Dendritic cell treated with granulocyte-macrophage colony-stimulating factor and Interleukin-4, amounts not matched to agents 40 ng/mL and 50 ng/mL, for 4 days (primary cell): ENCODE measurements at regions of chr14 and their contacts with region 1.

Region 1: DNA sequence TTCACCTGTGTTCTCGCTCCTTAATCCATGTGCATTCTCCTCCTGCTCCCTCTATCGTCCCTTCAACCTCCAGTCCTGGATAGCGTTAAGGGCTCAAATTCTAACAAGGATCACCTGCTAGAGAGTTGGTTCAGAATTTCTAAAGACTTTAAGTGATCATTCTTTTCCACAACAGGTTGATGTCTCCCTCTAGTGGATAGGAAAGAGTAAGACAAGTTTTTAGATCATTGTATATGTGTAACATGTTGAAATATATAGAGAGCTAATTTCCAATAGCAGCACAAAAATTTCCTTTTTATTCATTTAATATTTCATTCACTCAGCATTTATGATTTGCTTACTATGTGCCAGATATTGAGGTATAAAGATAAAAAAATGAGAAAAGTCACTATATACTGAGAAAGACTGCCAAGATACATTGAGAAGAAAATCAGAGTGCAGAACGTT is 9.3 kb upstream of the ESR2 start:
- H3K4me3 Mint-ChIP-seq: no peak overlapping the region
- H3K27ac Mint-ChIP-seq: no peak overlapping the region
- H3K4me1 Mint-ChIP-seq: no peaks in the 10 kb centered on the region
- H3K27me3 Mint-ChIP-seq: no peaks in the 10 kb centered on the region

Region 2: DNA sequence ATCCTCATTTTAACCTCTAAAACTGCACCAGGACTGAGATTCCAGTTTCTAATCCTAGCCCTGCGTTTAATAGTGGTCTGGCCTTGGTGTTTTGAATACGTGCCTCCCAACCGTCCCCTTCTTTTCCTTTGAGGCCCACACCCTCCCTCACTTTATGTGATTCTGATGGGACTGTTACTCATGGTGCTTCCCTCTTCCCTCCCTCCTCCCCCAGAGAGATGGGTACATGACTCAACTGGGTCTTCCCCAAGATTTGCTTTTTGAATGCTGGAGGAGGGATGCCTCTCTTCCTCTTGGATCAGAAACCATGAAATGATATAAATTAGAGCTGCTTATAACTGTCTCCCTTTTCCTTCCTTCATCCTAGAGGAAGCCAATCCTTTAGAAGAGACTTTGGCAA is 752.2 kb before region 1 on chr14:
- intact Hi-C with region 1: no loop called
- H3K4me3 Mint-ChIP-seq: no peak overlapping the region
- H3K27ac Mint-ChIP-seq: no peak overlapping the region
- H3K4me1 Mint-ChIP-seq: peaks cover 16% of the 10 kb centered on the region
- H3K27me3 Mint-ChIP-seq: peaks cover 3% of the 10 kb centered on the region

Region 3: GRCh38 chr14:63624203-63624602 is 679.3 kb before region 1 on chr14:
- intact Hi-C with region 1: loop called (anchors 5 kb)
- H3K4me3 Mint-ChIP-seq: no peak overlapping the region
- H3K27ac Mint-ChIP-seq: no peak overlapping the region
- H3K4me1 Mint-ChIP-seq: no peaks in the 10 kb centered on the region
- H3K27me3 Mint-ChIP-seq: no peaks in the 10 kb centered on the region

Region 4: GRCh38 chr14:63795532-63795931 is 508.0 kb before region 1 on chr14:
- intact Hi-C with region 1: loop called (anchors 5 kb)
- H3K4me3 Mint-ChIP-seq: no peak overlapping the region
- H3K27ac Mint-ChIP-seq: no peak overlapping the region
- H3K4me1 Mint-ChIP-seq: no peaks in the 10 kb centered on the region
- H3K27me3 Mint-ChIP-seq: peaks cover 5% of the 10 kb centered on the region

Region 5: DNA sequence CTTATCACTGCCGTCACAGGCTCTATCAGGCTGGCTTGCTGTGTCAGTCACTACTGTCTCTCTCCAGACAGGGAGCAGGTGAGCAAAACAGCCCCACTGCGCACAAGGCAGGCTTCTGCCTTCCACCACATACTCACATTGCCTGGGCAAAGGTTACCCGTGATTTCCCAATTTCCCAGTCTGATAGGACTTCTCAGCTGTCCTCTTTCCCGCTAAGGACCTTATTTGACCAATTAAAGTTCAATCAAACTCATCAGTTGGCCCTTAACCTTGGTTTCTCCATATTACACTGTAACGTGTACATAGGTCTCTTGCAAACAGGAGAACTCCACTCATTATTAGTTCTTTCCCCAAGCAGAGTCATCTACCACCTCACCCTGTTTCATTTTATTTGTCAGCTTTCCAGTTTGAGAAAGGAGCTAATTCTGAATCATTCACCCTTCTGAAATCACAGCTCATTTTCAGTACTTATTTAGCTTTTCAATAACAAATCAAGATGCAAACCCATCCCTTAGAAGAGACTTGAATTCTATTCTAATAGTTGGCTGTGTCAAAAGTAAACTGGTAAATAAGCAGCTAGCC is 180.2 kb before region 1 on chr14:
- intact Hi-C with region 1: no loop called
- H3K4me3 Mint-ChIP-seq: no peak overlapping the region
- H3K27ac Mint-ChIP-seq: no peak overlapping the region
- H3K4me1 Mint-ChIP-seq: no peaks in the 10 kb centered on the region
- H3K27me3 Mint-ChIP-seq: no peaks in the 10 kb centered on the region